ENCODE measurements at regions of chr20 and their contacts with region 1.

Region 1: DNA sequence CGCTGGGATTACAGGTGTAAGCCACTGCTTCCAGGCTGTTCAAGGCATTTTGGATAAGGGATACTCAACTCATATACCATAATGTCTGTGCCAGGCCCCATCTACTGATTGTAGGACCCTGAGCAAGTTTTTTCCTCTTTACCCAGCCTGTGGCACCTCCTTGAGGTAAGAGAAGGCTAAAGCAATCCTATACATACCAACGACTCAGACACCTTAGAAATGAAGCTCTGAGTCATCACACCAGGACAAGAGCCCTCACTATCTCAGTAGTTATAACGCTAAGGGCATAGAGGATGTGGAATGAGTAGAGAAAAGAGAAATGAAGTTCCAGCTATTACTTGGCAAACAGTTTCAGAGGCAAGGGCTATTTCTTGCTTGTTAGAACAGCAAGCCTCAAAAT is 16.9 kb downstream of the NDRG3 start:
- DNase-seq: peak; percentile 29
- ATAC-seq: no peak
- H3K4me3 ChIP-seq: no peak overlapping the region
- H3K27ac ChIP-seq: no peak overlapping the region
- H3K4me1 ChIP-seq: peaks cover 20% of the 10 kb centered on the region
- H3K27me3 ChIP-seq: no peaks in the 10 kb centered on the region
- CTCF ChIP-seq: peak; percentile 57
- EP300 ChIP-seq: no peak
- POLR2A ChIP-seq: no peak
- RAD21 ChIP-seq: no peak

Region 2: GRCh38 chr20:36550797-36551299 is 178.1 kb before region 1 on chr20:
- CTCF ChIA-PET with region 1: no interaction called
- POLR2A ChIA-PET with region 1: no interaction called
- in situ Hi-C with region 1: no loop called
- intact Hi-C with region 1: loop called (anchors 1 kb)
- DNase-seq: no peak
- ATAC-seq: no peak
- H3K4me3 ChIP-seq: no peak overlapping the region; a peak in 1 of 6 replicates
- H3K27ac ChIP-seq: no peak overlapping the region
- H3K4me1 ChIP-seq: peaks cover 51% of the 10 kb centered on the region
- H3K27me3 ChIP-seq: no peaks in the 10 kb centered on the region
- CTCF ChIP-seq: no peak
- EP300 ChIP-seq: no peak
- POLR2A ChIP-seq: no peak
- RAD21 ChIP-seq: no peak

Region 3: DNA sequence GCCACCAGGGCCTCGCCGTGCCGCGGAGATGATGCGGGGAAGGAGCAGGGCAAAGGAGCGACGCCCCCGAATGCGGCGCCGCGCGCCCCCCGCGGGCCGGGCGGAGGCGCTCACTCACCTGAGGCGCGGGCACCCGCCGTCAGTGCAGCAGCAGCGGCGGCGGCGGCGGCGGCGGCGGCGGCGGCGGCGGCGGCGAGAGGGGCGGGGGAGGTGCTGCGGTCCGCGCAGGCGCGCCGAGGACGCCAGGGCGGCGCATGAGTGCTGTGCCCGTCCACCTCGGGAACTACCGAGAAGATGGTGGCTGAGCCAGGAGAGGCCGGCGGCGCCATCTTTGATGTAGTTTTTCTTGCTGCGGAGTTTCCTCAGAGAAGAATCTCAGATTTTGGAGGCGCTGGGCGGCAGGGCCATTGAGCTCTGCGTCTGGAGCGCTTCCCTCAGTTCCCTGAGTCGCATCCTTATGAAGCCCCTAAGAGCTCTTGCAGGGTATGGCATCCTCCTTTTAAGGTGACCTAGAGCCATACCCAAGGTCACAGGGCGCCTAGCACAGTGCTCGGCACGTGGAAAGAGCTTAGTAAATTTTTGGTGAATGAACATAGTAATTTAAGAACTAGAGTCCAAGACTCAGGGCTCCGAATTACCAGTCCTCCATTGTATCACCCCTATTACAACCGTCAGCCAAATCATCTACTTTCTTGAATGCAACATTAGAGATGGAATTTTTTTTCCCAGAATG is 17.1 kb after region 1 on chr20 and contains the start of gene NDRG3:
- CTCF ChIA-PET with region 1: no interaction called
- POLR2A ChIA-PET with region 1: interaction called, 19 read pairs
- in situ Hi-C with region 1: no loop called
- intact Hi-C with region 1: no loop called
- DNase-seq: peak; percentile 96
- ATAC-seq: peak; percentile 87
- H3K4me3 ChIP-seq: peak within 1 kb of the TSS; percentile 75 to 98 (median 93)
- H3K27ac ChIP-seq: peak within 1 kb of the TSS; percentile 70
- H3K4me1 ChIP-seq: peaks cover 18% of the 10 kb centered on the region
- H3K27me3 ChIP-seq: no peaks in the 10 kb centered on the region; a peak in 1 of 5 replicates
- CTCF ChIP-seq: 0 out of 2 replicates have a peak, but pooled peaks have one; percentile 4
- EP300 ChIP-seq: 0 out of 4 replicates have a peak, but pooled peaks of 1 of the 2 experiments have one; percentile 22
- POLR2A ChIP-seq: peak; percentile 83 to 84
- RAD21 ChIP-seq: no peak
- total RNA-seq, gene NDRG3: 36.0 and 43.3 TPM in 2 replicates